IMR-90 (cell line): ENCODE measurements at regions of chr19 and their contacts with region 1.

Region 1: DNA sequence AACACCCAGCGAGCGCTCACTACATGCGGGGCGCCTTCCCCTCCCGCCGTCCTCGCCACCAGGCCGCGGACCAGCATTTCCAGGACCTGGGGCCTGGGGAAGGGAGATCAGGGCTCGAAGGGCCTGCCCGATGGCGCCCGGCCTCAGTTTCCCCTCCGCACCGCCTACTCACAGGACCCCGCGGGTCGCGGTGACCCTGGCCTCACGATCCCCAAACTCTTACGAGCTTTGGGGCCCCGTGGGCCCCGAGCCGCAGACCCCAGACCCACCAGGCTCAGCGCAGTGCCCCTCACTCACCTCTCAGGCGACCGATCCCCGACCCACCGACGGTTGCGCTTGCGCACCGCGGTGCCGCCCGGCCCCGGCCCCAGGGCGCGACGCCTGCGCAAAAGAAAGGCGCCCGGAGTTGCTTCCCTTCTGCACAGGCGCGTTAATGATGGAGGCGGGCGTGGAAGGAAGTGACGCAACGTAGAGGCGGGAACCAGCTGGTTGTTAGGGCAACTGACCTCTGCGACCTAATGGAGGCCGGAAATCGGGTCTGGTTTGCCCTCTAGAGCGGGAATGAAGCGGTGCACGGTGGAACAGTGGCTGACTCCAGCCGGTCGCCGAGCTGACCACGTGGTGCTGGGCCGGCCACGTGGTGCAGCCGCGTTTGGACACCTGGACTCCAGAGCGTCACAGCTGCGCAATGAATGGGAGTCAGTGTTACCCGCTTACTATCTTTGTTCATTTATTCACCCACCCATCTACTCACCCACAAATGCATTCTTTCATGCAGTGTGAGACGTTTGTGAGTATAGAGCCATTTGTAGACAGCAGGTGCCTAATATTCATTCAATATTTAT is at the start of gene SGTA:
- DNase-seq: peak; percentile 99
- ATAC-seq: peak; percentile 76
- H3K4me3 ChIP-seq: peak within 1 kb of the TSS; percentile 81
- H3K27ac ChIP-seq: peak within 1 kb of the TSS; percentile 58
- H3K4me1 ChIP-seq: peaks cover 4% of the 10 kb centered on the region; the same call in 1 of the 2 replicates
- H3K27me3 ChIP-seq: no peaks in the 10 kb centered on the region
- CTCF ChIP-seq: peak; percentile 66
- POLR2A ChIP-seq: peak; percentile 73; the same call in 1 of the 2 replicates
- RAD21 ChIP-seq: no peak
- total RNA-seq, gene SGTA: 17.4 and 20.6 TPM in 2 replicates

Region 2: GRCh38 chr19:2739602-2740313 is 43.4 kb before region 1 on chr19 and contains the start of gene SLC39A3:
- CTCF ChIA-PET with region 1: interaction called, 3 read pairs
- POLR2A ChIA-PET with region 1: no interaction called
- dilution Hi-C with region 1: no loop called
- in situ Hi-C with region 1: no loop called
- intact Hi-C with region 1: loop called (anchors 2 kb)
- DNase-seq: peak; percentile 98
- ATAC-seq: peak; percentile 100
- H3K4me3 ChIP-seq: peak within 1 kb of the TSS; percentile 91
- H3K27ac ChIP-seq: peak within 1 kb of the TSS; percentile 58
- H3K4me1 ChIP-seq: no peaks in the 10 kb centered on the region; the same call in 1 of the 2 replicates
- H3K27me3 ChIP-seq: no peaks in the 10 kb centered on the region
- CTCF ChIP-seq: no peak
- POLR2A ChIP-seq: peak; percentile 36; the same call in 1 of the 2 replicates
- RAD21 ChIP-seq: 0 out of 2 replicates have a peak, but pooled peaks have one; percentile 13
- total RNA-seq, gene SLC39A3: 12.4 and 12.8 TPM in 2 replicates